PC-9 (cell line): ENCODE measurements at regions of chr10 and their contacts with region 1.

Region 1: DNA sequence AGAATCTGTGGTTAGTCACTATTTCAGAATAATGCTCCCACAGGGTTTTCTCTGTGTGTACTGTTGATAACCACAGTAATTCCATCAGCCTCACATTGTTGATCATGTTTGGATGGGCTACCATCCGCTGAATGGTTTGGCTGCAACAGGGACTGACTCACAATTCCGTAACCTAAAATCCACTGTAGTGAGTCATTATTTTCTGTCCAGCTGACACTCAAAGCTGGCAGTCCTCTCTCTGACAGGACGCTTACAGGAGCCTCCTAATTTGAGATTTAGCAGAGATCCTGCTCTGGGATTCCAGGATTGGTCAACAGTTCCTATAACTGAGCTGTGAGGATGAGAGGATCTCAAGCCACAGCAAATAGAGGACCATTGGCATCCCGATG is 32.7 kb downstream of the VWA2 start:
- DNase-seq: peak; percentile 40 to 80
- H3K4me3 ChIP-seq: no peak overlapping the region
- H3K27ac ChIP-seq: no peak overlapping the region
- H3K4me1 ChIP-seq: 0 out of 2 replicates have a peak, but pooled peaks cover 10% of the 10 kb centered on the region
- H3K27me3 ChIP-seq: no peaks in the 10 kb centered on the region
- CTCF ChIP-seq: no peak

Region 2: DNA sequence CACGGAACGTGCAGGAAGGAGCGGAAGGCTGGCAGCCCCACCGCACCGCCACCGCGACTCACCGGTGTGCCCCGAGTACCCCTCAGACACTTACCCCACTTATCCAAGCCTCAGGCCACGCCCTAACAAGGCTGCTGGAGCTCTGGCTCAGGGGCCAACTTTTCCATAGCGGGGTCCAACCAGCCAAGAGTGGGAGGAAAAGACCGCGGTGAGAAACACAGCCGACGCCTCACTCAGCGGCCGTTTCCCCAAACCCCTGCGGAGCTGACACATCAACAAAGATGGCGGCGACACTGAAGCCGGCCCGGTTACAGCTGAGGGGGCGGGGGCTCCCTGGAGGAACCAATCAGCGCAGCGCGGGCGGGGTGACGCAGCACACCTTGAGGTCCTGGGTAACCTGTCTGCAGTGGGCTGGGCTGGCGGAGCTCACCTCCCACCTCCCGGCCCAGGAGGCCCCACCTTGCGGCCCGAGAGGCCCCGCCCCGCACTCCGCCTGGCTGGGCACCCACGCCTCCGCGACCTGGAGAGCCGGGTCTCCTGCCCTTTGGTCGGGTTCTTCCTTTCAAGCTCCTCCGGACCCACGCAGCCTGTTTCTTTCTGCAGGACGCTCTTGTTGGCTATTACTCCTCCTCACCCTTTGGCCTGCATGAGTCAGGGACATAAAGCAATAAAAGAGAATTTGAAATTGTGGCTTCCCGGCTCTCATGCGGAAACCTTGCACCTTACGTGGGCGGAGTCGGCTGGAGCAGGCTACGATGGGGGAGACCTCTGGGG is 97.7 kb before region 1 on chr10 and contains the start of gene CCDC186:
- CTCF ChIA-PET with region 1: no interaction called
- POLR2A ChIA-PET with region 1: no interaction called
- intact Hi-C with region 1: loop called (anchors 10 kb)
- DNase-seq: peak; percentile 90 to 95
- H3K4me3 ChIP-seq: peak within 1 kb of the TSS; percentile 89
- H3K27ac ChIP-seq: peak within 1 kb of the TSS; percentile 92
- H3K4me1 ChIP-seq: peaks cover 32% of the 10 kb centered on the region
- H3K27me3 ChIP-seq: no peaks in the 10 kb centered on the region
- CTCF ChIP-seq: no peak
- total RNA-seq, gene CCDC186: 14.3 and 15.6 TPM in 2 replicates